ENCODE measurements at regions of chr10 and their contacts with region 1.

Region 1: GRCh38 chr10:21078410-21079329 is 181.6 kb upstream of the NEBL start:
- DNase-seq: peak; percentile 19 to 85 (median 66)

Region 2: DNA sequence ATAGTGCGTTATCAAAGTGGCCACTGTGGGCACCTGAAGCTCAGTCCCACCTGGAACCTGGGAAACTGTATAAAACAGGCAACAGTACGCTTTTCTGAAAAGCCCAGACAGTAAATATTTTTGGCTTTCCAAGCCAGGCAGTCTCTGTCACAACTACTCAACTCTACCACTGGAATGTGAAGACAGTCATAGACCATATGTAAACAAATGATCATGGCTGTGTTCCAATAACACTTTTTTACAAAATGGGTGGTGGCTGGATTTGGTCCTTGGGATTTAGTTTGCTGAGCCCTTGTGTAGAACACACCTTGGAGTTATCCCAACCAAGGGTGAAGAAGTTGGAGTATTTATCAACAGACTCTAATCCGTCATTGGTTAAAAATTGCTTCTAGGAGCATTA is 187.0 kb after region 1 on chr10:
- intact Hi-C with region 1: loop called (anchors 10 kb)
- DNase-seq: no peak

Measured in head of caudate nucleus (tissue), 42 donors.